ENCODE measurements at regions of chr3 and their contacts with region 1.

Region 1: DNA sequence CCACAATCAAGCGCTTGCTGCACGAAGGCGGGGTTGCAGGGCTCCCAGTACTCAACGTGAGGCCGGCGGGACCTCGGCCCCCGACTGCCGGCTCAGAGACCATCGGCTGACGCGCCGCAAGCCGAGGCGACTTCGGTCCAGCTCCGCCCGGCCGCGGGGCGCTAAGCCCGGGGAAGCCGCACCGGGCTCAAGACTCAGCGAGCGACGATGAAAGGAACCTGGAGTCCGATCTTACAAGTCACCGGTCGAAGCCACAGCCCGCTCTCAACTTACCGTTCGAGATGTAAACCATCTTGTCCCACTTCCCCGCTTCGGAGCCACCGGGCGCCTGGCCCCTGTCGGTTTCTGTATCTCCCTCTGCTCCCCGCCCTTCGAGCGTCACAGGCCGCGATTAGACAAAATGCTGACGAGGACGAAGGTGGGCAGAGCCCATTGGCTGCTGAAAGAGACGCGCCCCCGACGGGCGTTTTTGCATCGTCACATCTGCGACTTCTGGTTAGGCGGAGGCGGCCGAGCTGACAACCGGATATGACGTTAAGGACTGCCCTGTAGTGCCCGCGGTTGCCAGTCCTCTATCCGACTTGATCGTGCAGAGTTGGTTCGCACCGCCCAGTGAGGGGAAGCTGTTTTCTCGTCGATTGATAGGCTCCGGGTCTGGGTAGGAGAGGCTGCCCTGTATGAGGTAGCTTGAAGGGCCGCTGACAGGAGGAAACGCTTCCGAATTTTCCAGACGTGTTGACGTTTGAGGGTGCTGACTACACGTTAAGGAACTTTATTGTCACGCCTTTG is at the start of gene SELENOK:
- H3K4me3 Mint-ChIP-seq: peak within 1 kb of the TSS; percentile 82
- H3K27ac Mint-ChIP-seq: peak within 1 kb of the TSS; percentile 94
- H3K4me1 Mint-ChIP-seq: peaks cover 41% of the 10 kb centered on the region
- H3K27me3 Mint-ChIP-seq: peaks cover 29% of the 10 kb centered on the region

Region 2: GRCh38 chr3:53347261-53348064 is 544.2 kb before region 1 on chr3 and contains the start of gene DCP1A:
- intact Hi-C with region 1: loop called (anchors 10 kb)
- H3K4me3 Mint-ChIP-seq: peak within 1 kb of the TSS; percentile 98
- H3K27ac Mint-ChIP-seq: peak within 1 kb of the TSS; percentile 96
- H3K4me1 Mint-ChIP-seq: peaks cover 32% of the 10 kb centered on the region
- H3K27me3 Mint-ChIP-seq: no peaks in the 10 kb centered on the region

Region 3: DNA sequence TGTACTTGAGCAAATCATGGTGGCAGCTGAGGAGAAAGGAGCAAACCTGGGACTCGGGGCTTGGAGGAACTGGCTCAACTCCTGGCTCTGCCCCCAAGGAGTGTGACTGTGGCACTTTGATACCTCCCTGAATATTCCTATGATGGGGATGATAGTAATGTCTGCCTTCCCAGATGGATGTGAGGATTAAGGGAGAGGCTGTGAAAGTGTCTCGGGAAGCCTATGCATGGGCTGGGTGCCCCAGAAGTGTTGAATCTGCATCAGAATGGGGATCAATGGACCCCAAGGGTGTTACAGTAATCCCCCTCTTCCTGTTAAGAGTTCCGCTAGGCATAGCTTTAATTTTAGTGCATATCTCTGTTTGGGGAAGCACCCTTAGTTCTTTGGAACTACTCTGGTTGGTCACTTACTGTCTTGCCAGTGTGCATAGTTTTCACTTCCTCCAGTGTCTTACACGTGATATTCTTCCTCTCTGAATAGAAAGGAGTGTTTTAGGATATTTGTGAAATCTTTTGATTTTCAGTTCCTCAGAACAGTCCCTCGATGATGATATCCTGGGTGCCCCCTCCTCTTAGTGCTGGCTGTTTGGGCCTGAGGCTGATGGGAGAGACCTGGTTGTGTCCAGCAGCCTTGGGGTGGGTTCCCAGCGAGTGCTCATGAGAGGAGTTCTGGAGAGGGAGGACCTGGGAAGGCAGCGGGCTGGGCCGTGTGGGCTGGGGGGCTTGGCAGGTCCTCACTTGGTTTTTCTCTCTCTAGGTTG is 143.0 kb before region 1 on chr3:
- intact Hi-C with region 1: loop called (anchors 5 kb)
- H3K4me3 Mint-ChIP-seq: peak overlapping the region; percentile 59
- H3K27ac Mint-ChIP-seq: peak overlapping the region; percentile 99
- H3K4me1 Mint-ChIP-seq: peaks cover 92% of the 10 kb centered on the region
- H3K27me3 Mint-ChIP-seq: no peaks in the 10 kb centered on the region